B cell (primary cell): ENCODE measurements at regions of chr12 and their contacts with region 1.

Region 1: GRCh38 chr12:43805860-43806736 is at the start of gene TWF1:
- DNase-seq: peak; percentile 93
- ATAC-seq: peak; percentile 95
- H3K4me3 ChIP-seq: peak within 1 kb of the TSS; percentile 78 to 94 (median 85)
- H3K4me3 Mint-ChIP-seq: peak within 1 kb of the TSS; percentile 99
- H3K27ac ChIP-seq: peak within 1 kb of the TSS; percentile 87 to 96
- H3K27ac Mint-ChIP-seq: peak within 1 kb of the TSS; percentile 100
- H3K4me1 ChIP-seq: peaks cover 11 to 28% of the 10 kb centered on the region in 2 donors
- H3K4me1 Mint-ChIP-seq: peaks cover 24% of the 10 kb centered on the region
- H3K27me3 ChIP-seq: no peaks in the 10 kb centered on the region
- H3K27me3 Mint-ChIP-seq: no peaks in the 10 kb centered on the region
- CTCF ChIP-seq: peak; percentile 31
- total RNA-seq, gene TWF1: 30.0 and 34.3 TPM in 2 replicates

Region 2: DNA sequence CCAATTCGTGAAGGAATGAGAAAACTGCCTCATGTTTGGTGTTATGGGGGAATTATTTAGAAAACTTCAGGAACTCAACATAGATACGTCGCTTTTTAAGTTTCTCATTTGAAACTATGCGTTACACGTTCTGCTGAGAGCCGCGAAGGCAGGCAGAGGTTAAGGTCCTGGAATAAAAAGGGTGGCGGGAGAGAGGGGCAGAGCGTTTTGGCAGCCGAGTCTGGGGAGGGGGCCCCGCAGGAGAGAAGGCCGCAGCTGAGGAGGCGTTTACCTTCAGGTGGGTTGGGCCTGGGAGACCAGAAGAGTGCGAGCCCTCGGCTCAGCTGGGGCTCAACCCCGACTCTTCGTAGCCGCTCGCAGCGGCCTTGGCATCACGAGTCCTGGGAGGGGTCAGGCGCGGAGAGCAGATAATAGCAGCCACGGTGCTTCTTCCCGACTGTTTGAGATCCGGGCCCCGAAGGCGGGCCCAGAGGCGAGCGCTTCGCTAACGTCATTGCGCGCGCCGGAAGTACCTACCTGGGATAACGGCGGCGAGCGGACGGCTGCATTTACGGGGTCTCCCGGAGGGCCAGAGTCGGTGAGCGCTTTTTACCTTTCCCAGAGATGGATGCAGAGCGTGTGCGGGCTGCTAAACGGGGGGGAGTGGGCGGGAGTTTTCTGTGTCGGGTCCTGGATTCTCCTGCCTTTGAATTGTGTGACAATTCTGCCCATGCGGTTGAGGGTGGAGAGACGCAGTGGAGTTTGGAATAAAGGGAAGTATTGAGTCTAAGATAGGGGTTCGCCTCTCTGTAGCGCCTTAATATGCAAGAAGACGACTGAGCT is 1480.2 kb before region 1 on chr12 and contains the starts of genes PPHLN1 and ZCRB1:
- CTCF ChIA-PET with region 1: no interaction called
- POLR2A ChIA-PET with region 1: no interaction called
- intact Hi-C with region 1: loop called (anchors 1 kb)
- DNase-seq: peak; percentile 87
- ATAC-seq: peak; percentile 88
- H3K4me3 ChIP-seq: peak within 1 kb of the TSS; percentile 60 to 98 (median 84)
- H3K4me3 Mint-ChIP-seq: peak within 1 kb of the TSS; percentile 95
- H3K27ac ChIP-seq: peak within 1 kb of the TSS; percentile 64 to 92
- H3K27ac Mint-ChIP-seq: peak within 1 kb of the TSS; percentile 96
- H3K4me1 ChIP-seq: peaks cover 29 to 39% of the 10 kb centered on the region in 2 donors
- H3K4me1 Mint-ChIP-seq: peaks cover 53% of the 10 kb centered on the region
- H3K27me3 ChIP-seq: no peaks in the 10 kb centered on the region
- H3K27me3 Mint-ChIP-seq: no peaks in the 10 kb centered on the region
- CTCF ChIP-seq: no peak
- total RNA-seq, gene PPHLN1: 99.5 and 104 TPM in 2 replicates
- total RNA-seq, gene ZCRB1: 23.2 and 27.1 TPM in 2 replicates

Region 3: DNA sequence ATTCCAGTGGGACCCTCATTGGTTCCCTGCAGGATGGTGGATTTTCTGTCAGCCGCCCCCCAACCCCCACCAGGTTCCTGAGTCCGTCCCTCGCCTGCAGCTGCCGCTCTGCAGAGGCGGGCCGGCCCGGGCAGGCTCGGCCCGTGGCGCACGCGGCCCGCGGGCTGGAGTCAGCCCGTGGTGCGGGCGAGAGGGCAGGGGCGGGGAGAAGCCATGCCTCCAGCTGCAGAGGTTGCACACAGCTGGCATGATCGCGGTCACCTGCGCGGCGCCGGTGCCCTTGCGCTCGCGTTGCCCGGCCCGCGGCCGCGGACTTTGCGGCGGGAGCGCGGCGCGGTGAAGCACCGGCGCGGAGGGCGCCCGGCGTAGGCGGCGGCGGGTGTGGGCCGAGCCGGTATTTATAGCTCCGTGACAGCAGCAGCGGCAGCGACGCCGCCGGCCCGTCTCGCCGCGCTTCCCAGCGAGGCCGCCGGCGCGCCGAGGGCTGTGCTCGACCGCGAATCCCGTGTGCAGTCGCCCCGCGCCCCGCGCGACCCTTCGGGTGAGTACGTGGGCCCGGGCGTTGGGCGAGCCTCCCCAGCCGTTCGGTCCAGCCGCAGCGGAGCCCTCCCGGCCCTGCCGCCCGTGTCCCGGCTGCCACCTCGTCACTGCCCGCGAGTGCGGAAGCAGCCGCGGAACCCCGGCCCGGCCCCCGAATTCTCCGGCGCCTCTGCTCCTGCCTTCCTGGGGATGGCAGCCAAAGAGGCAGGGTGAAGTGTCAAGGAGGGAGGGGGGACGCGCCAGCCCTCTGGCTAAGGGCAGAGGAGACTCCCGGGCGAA is 29.8 kb after region 1 on chr12 and contains the start of gene TMEM117:
- CTCF ChIA-PET with region 1: interaction called, 14 read pairs
- POLR2A ChIA-PET with region 1: interaction called, 17 read pairs
- intact Hi-C with region 1: loop called (anchors 1 kb)
- DNase-seq: peak; percentile 85
- ATAC-seq: peak; percentile 73
- H3K4me3 ChIP-seq: peak within 1 kb of the TSS; percentile 50 to 80 (median 73)
- H3K4me3 Mint-ChIP-seq: peak within 1 kb of the TSS; percentile 90
- H3K27ac ChIP-seq: peak within 1 kb of the TSS; percentile 79 to 93
- H3K27ac Mint-ChIP-seq: peak within 1 kb of the TSS; percentile 91
- H3K4me1 ChIP-seq: peaks cover 12% of the 10 kb centered on the region in 2 donors
- H3K4me1 Mint-ChIP-seq: peaks cover 19% of the 10 kb centered on the region
- H3K27me3 ChIP-seq: no peaks in the 10 kb centered on the region
- H3K27me3 Mint-ChIP-seq: no peaks in the 10 kb centered on the region
- CTCF ChIP-seq: no peak
- total RNA-seq, gene TMEM117: 10.4 and 10.7 TPM in 2 replicates

Region 4: GRCh38 chr12:43858096-43858495 is 52.0 kb after region 1 on chr12:
- CTCF ChIA-PET with region 1: no interaction called
- POLR2A ChIA-PET with region 1: no interaction called
- intact Hi-C with region 1: no loop called
- DNase-seq: no peak
- ATAC-seq: no peak
- H3K4me3 ChIP-seq: no peak overlapping the region
- H3K4me3 Mint-ChIP-seq: no peak overlapping the region
- H3K27ac ChIP-seq: no peak overlapping the region
- H3K27ac Mint-ChIP-seq: no peak overlapping the region
- H3K4me1 ChIP-seq: no peaks in the 10 kb centered on the region
- H3K4me1 Mint-ChIP-seq: no peaks in the 10 kb centered on the region
- H3K27me3 ChIP-seq: no peaks in the 10 kb centered on the region
- H3K27me3 Mint-ChIP-seq: no peaks in the 10 kb centered on the region
- CTCF ChIP-seq: no peak